ACHN (cell line): ENCODE measurements at regions of chr1 and their contacts with region 1.

Region 1: GRCh38 chr1:2412519-2413233 is at the start of gene PEX10:
- DNase-seq: peak; percentile 93

Region 2: DNA sequence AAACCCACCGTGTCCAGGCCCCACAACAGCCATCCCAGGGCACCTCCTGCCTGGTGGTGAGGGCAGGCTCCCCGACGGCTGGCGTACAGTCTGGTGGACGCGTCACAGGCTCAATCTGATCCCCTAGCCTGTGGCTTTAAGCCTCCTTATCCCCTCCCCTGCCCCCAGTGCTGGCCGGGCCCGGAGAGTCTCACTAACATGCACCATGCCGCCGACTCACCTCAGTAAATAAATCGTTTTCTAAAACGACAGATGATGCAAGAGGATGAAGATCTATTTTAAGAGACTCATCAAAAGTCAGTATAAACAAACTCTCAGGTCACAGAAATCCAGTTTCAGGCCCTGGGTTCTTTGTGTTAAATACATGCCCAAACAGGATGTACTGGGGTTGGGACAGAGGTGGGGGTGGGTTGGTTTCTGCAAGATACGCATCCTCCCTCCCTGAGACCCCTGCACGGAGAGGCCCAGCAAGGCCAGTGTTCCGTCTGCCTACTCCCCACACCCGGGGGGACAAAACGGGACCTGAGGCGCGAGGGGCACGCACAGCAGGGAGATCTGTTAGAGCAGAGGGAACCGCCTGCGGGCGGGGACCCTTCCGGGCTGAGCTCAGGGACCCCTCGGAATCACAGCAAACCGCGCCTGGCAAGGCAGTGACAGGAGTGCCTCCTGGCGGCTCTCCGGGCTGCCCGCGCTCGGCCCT is 110.7 kb after region 1 on chr1:
- in situ Hi-C with region 1: loop called (anchors 25 kb)
- DNase-seq: no peak